Activated B cell treated with CpG ODN at 0.5 μM for 24 hours (primary cell): ENCODE measurements at regions of chr1 and their contacts with region 1.

Region 1: DNA sequence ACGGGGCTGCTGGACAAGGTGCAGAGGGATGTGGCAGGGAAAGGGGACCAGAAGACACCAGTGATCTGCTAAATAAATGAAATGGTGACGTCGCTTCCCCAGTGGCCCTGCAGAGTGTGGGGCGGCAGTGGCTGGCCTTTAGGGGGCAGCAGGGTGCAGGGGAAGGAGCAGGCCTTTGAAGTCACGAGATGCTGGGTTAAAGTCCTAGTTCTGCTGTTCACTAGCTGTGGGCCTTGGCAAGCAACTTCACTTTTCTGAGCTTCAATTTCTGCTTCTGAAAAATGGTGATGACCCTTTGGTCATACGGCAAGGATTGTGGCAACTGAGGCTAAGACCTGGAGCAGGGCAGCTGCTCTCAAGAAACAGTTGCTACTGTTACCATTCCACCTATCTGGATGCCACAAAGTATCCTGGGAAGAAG is 9.2 kb upstream of the GALE start:
- DNase-seq: peak; percentile 69
- ATAC-seq: peak; percentile 89
- H3K4me3 Mint-ChIP-seq: no peak overlapping the region
- H3K27ac Mint-ChIP-seq: peak overlapping the region; percentile 74
- H3K4me1 Mint-ChIP-seq: peaks cover 25% of the 10 kb centered on the region
- H3K27me3 Mint-ChIP-seq: no peaks in the 10 kb centered on the region
- CTCF ChIP-seq: no peak

Region 2: GRCh38 chr1:23777979-23778814 is 31.6 kb before region 1 on chr1 and contains the start of gene PITHD1:
- CTCF ChIA-PET with region 1: interaction called, 11 read pairs
- POLR2A ChIA-PET with region 1: interaction called, 4 read pairs
- intact Hi-C with region 1: no loop called
- DNase-seq: peak; percentile 83
- ATAC-seq: peak; percentile 86
- H3K4me3 Mint-ChIP-seq: peak within 1 kb of the TSS; percentile 91
- H3K27ac Mint-ChIP-seq: peak within 1 kb of the TSS; percentile 90
- H3K4me1 Mint-ChIP-seq: peaks cover 30% of the 10 kb centered on the region
- H3K27me3 Mint-ChIP-seq: no peaks in the 10 kb centered on the region
- CTCF ChIP-seq: no peak
- total RNA-seq, gene PITHD1: 58.7 and 63.3 TPM in 2 replicates

Region 3: GRCh38 chr1:23838401-23838866 is 28.7 kb after region 1 on chr1:
- CTCF ChIA-PET with region 1: interaction called, 7 read pairs
- POLR2A ChIA-PET with region 1: interaction called, 13 read pairs
- intact Hi-C with region 1: loop called (anchors 1 kb)
- DNase-seq: peak; percentile 70
- ATAC-seq: peak; percentile 100
- H3K4me3 Mint-ChIP-seq: peak overlapping the region; percentile 76
- H3K27ac Mint-ChIP-seq: peak overlapping the region; percentile 63
- H3K4me1 Mint-ChIP-seq: peaks cover 10% of the 10 kb centered on the region
- H3K27me3 Mint-ChIP-seq: no peaks in the 10 kb centered on the region
- CTCF ChIP-seq: no peak

Region 4: GRCh38 chr1:23867953-23868556 is 58.3 kb after region 1 on chr1 and contains the start of gene FUCA1:
- CTCF ChIA-PET with region 1: interaction called, 23 read pairs
- POLR2A ChIA-PET with region 1: interaction called, 3 read pairs
- intact Hi-C with region 1: loop called (anchors 1 kb)
- DNase-seq: peak; percentile 92
- ATAC-seq: peak; percentile 97
- H3K4me3 Mint-ChIP-seq: peak within 1 kb of the TSS; percentile 84
- H3K27ac Mint-ChIP-seq: peak within 1 kb of the TSS; percentile 87
- H3K4me1 Mint-ChIP-seq: peaks cover 36% of the 10 kb centered on the region
- H3K27me3 Mint-ChIP-seq: no peaks in the 10 kb centered on the region
- CTCF ChIP-seq: no peak
- total RNA-seq, gene FUCA1: 9.5 and 10.7 TPM in 2 replicates

Region 5: DNA sequence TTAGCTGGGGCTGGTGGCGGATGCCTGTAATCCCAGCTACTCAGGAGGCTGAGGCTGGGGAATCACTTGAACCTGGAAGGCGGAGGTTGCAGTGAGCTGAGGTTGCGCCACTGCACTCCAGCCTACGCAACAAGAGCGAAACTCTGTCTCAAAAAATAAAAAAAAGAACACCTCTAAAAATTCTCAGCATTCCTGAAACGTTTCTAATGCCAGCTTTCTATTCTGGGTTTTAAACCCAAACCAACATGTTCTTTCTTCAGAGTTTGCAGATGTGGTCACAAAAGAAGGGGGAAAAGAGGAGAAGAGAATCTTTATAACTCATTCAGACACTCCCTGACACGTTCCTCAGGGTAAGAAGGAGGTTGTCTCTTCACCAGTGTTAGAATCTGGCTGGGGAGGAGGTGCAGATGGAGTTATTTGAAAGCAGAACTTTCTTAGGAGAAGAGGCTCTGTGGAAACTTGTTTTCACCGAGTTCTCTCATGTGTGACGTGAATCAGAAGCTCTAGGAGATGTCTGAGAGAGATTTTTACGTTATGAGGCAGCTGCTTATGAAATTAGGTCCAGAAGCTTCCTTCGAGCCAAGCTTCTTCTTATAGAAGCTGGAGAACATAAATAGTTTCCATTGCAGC is 121.2 kb after region 1 on chr1:
- CTCF ChIA-PET with region 1: interaction called, 12 read pairs
- POLR2A ChIA-PET with region 1: interaction called, 6 read pairs
- intact Hi-C with region 1: no loop called
- DNase-seq: no peak
- ATAC-seq: peak; percentile 86
- H3K4me3 Mint-ChIP-seq: peak overlapping the region; percentile 76
- H3K27ac Mint-ChIP-seq: peak overlapping the region; percentile 91
- H3K4me1 Mint-ChIP-seq: peaks cover 43% of the 10 kb centered on the region
- H3K27me3 Mint-ChIP-seq: no peaks in the 10 kb centered on the region
- CTCF ChIP-seq: no peak

Region 6: GRCh38 chr1:24027838-24028468 is 218.2 kb after region 1 on chr1:
- CTCF ChIA-PET with region 1: interaction called, 29 read pairs
- POLR2A ChIA-PET with region 1: interaction called, 8 read pairs
- intact Hi-C with region 1: loop called (anchors 1 kb)
- DNase-seq: no peak
- ATAC-seq: no peak
- H3K4me3 Mint-ChIP-seq: no peak overlapping the region
- H3K27ac Mint-ChIP-seq: no peak overlapping the region
- H3K4me1 Mint-ChIP-seq: peaks cover 6% of the 10 kb centered on the region
- H3K27me3 Mint-ChIP-seq: no peaks in the 10 kb centered on the region
- CTCF ChIP-seq: no peak